ENCODE measurements at regions of chr7 and their contacts with region 1.

Region 1: GRCh38 chr7:70693686-70694360 is 438.1 kb upstream of the GALNT17 start:
- DNase-seq: peak in 1 of 2 donors; percentile 88
- H3K4me3 ChIP-seq: peak overlapping the region; percentile 92 to 98
- H3K27ac ChIP-seq: peak overlapping the region; percentile 77 to 97
- H3K4me1 ChIP-seq: peaks cover 5 to 12% of the 10 kb centered on the region in 2 donors
- H3K27me3 ChIP-seq: no peaks in the 10 kb centered on the region
- CTCF ChIP-seq: peak in 1 of 3 experiments; percentile 15

Region 2: DNA sequence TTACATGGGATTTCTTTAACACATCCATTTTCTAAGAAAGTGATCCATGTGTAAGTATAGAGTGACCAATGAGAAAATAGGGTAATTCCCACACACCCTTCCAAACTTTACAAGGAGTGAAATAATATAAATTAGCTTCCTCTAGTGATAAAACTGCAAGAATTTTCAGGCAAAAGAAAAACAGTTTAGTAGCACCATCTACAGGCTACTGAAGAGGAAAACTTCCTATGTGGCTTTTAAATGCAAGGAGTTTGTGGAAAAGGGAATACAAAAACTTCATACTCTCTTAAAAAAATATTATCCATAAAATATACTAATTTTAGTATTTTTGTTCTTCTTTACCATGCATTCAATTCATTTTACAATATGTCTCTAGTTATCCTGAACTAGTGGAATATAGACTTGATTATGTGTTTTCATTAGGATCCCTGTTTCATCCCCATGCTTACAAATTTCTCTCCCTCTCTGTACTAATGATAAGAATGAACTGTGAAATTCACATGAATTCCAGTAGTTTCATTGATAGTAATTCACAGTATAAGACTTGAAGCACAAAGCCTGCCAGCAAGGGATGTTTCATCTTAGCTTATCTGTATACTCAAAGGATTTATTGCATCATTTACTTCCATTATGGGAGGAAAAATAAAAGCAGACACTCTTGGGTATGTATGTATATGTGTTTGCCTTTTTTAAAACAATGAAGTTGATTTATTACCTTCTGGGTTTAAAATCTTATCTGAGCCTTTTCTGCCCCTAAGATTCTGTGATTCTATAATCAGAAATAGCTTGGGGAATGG is 652.7 kb before region 1 on chr7:
- intact Hi-C with region 1: loop called (anchors 5 kb)
- DNase-seq: no peak
- H3K4me3 ChIP-seq: no peak overlapping the region
- H3K27ac ChIP-seq: no peak overlapping the region
- H3K4me1 ChIP-seq: peaks cover 0 to 5% of the 10 kb centered on the region in 2 donors
- H3K27me3 ChIP-seq: no peaks in the 10 kb centered on the region
- CTCF ChIP-seq: peak in 2 of 3 experiments; percentile 16 to 40

Region 3: GRCh38 chr7:70193514-70193913 is 500.3 kb before region 1 on chr7:
- intact Hi-C with region 1: loop called (anchors 5 kb)
- DNase-seq: no peak
- H3K4me3 ChIP-seq: no peak overlapping the region
- H3K27ac ChIP-seq: no peak overlapping the region
- H3K4me1 ChIP-seq: no peaks in the 10 kb centered on the region
- H3K27me3 ChIP-seq: no peaks in the 10 kb centered on the region
- CTCF ChIP-seq: peak in 2 of 3 experiments; percentile 23 to 46

Region 4: DNA sequence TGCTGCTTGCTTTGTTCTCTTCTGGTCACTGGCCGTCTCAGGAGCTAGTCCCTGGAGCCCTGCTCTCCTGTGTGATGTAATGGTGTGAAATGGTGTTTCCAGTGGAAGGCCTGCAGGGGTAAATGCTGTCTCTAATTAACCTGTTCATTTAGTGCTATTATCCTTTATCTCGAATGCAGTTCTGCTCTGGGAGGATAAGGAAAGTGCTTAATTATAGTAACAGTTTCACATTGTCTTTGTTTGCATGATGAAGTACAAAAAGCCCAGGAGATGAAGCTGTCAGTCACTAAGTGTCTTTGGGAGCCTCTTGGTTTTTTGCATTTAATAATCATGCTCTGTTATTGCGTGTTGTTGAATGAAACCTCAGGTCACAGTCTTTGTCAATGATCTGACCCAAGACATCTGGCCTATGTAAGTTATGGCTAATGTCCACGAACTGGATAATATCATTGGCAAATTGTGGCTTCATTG is 317.2 kb before region 1 on chr7:
- intact Hi-C with region 1: loop called (anchors 5 kb)
- DNase-seq: no peak
- H3K4me3 ChIP-seq: no peak overlapping the region
- H3K27ac ChIP-seq: no peak overlapping the region
- H3K4me1 ChIP-seq: peaks cover 3 to 25% of the 10 kb centered on the region in 2 donors
- H3K27me3 ChIP-seq: no peaks in the 10 kb centered on the region
- CTCF ChIP-seq: no peak

Region 5: GRCh38 chr7:70668606-70669358 is 25.0 kb before region 1 on chr7:
- intact Hi-C with region 1: loop called (anchors 2 kb)
- DNase-seq: peak; percentile 36 to 79
- H3K4me3 ChIP-seq: peak overlapping the region in 1 of 2 donors; percentile 14
- H3K27ac ChIP-seq: peak overlapping the region; percentile 5 to 53
- H3K4me1 ChIP-seq: peaks cover 0 to 9% of the 10 kb centered on the region in 2 donors
- H3K27me3 ChIP-seq: no peaks in the 10 kb centered on the region
- CTCF ChIP-seq: no peak

Measured in ascending aorta (tissue), 2 donors.